T-cell (primary cell): ENCODE measurements at regions of chr1 and their contacts with region 1.

Region 1: GRCh38 chr1:207221934-207222351 is 99.5 kb upstream of the CD55 start:
- DNase-seq: no peak
- ATAC-seq: no peak
- H3K4me3 ChIP-seq: no peak overlapping the region
- H3K4me3 Mint-ChIP-seq: no peak overlapping the region
- H3K27ac ChIP-seq: no peak overlapping the region
- H3K27ac Mint-ChIP-seq: no peak overlapping the region
- H3K4me1 ChIP-seq: no peaks in the 10 kb centered on the region
- H3K4me1 Mint-ChIP-seq: peaks cover 6 to 12% (median 11%) of the 10 kb centered on the region in 3 donors
- H3K27me3 ChIP-seq: peaks cover 0 to 3% of the 10 kb centered on the region in 2 experiments
- H3K27me3 Mint-ChIP-seq: peaks cover 0 to 9% of the 10 kb centered on the region in 2 donors

Region 2: DNA sequence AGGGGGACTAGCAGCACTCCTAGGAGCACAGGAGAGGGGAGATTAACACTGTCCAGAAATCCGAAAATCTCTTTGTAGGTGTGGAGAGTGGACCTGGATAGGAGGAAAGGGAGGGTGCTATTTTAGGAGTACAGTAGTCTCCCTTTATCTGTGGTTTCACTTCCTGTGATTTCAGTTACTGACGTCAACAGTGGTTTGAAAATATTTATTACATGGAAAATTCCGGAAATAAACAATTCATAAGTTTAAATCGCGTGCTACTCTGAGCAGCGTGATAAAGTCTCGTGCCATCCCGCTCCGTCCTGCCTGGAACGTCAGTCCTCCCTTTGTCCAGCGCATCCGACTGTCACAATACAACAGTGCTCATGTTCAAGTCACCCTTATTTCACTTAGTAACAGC is 331.3 kb before region 1 on chr1:
- CTCF ChIA-PET with region 1: no interaction called
- POLR2A ChIA-PET with region 1: no interaction called
- DNase-seq: peak in 1 of 35 experiments; percentile 35
- ATAC-seq: peak in 3 of 4 experiments; percentile 63 to 77 (median 71)
- H3K4me3 ChIP-seq: no peak overlapping the region
- H3K4me3 Mint-ChIP-seq: peak overlapping the region; percentile 29 to 51 (median 31)
- H3K27ac ChIP-seq: no peak overlapping the region
- H3K27ac Mint-ChIP-seq: peak overlapping the region in 1 of 2 donors; percentile 70
- H3K4me1 ChIP-seq: peaks cover 4 to 8% of the 10 kb centered on the region in 2 experiments
- H3K4me1 Mint-ChIP-seq: peaks cover 23 to 38% (median 27%) of the 10 kb centered on the region in 3 donors
- H3K27me3 ChIP-seq: peaks cover 0 to 6% of the 10 kb centered on the region in 2 experiments
- H3K27me3 Mint-ChIP-seq: no peaks in the 10 kb centered on the region

Region 3: DNA sequence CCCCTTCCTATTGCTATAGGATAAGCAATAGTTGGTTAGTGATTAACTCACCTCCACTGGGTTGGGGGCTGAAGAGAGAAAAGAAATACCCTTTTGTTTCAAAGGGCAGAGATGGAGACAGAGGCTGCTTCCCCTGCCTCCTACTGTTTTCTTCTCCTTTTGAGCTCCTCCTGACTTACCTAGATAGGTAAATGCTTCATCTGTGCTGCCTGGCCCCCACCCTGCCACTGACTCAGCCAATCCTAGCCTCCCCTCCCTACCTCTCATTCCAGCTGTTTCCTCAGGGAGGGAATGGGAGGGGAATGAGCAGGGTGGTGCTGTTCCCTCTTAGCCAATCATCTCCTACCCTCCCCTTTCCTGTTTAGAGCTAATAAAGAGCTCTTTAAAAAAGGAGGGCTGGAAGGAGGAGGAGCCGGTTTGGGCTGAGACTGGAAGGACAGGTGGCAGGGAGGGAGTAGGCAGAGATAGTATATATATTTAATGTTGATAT is 189.4 kb before region 1 on chr1 and contains the start of gene C1orf116:
- CTCF ChIA-PET with region 1: no interaction called
- POLR2A ChIA-PET with region 1: no interaction called
- DNase-seq: no peak
- ATAC-seq: no peak
- H3K4me3 ChIP-seq: no peak within 1 kb of the TSS
- H3K4me3 Mint-ChIP-seq: no peak within 1 kb of the TSS
- H3K27ac ChIP-seq: no peak within 1 kb of the TSS
- H3K27ac Mint-ChIP-seq: no peak within 1 kb of the TSS
- H3K4me1 ChIP-seq: no peaks in the 10 kb centered on the region
- H3K4me1 Mint-ChIP-seq: no peaks in the 10 kb centered on the region
- H3K27me3 ChIP-seq: peaks cover 0 to 17% of the 10 kb centered on the region in 2 experiments
- H3K27me3 Mint-ChIP-seq: peaks cover 23 to 38% of the 10 kb centered on the region in 2 donors
- total RNA-seq, gene C1orf116: 0.08 to 0.29 (median 0.14) TPM

Region 4: DNA sequence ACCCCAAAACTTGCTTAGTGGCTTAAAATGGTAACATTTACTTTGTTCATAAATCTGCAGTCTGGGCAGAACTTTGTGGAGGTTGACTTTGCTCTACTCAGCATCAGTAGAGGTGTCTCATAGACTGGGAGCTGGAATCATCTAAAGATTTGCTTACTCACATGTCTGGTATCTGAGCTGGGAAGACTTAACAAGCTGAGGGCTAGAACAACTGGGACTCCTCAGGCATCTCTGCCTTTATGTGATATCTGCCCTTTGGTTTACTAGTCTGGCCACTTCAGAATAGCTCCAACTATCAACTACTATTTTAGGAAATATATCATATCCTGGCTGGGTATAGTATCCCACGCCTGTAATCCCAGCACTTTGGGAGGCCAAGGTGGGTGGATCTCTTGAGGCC is 35.4 kb before region 1 on chr1:
- CTCF ChIA-PET with region 1: no interaction called
- POLR2A ChIA-PET with region 1: no interaction called
- DNase-seq: no peak
- ATAC-seq: no peak
- H3K4me3 ChIP-seq: no peak overlapping the region
- H3K4me3 Mint-ChIP-seq: no peak overlapping the region
- H3K27ac ChIP-seq: no peak overlapping the region
- H3K27ac Mint-ChIP-seq: no peak overlapping the region
- H3K4me1 ChIP-seq: peaks cover 0 to 6% of the 10 kb centered on the region in 2 experiments
- H3K4me1 Mint-ChIP-seq: peaks cover 14 to 25% (median 18%) of the 10 kb centered on the region in 3 donors
- H3K27me3 ChIP-seq: no peaks in the 10 kb centered on the region
- H3K27me3 Mint-ChIP-seq: no peaks in the 10 kb centered on the region

Region 5: GRCh38 chr1:207329469-207329868 is 107.5 kb after region 1 on chr1:
- CTCF ChIA-PET with region 1: no interaction called
- POLR2A ChIA-PET with region 1: interaction called in 1 of 2 experiments, 10 read pairs
- DNase-seq: no peak
- ATAC-seq: peak in 2 of 4 experiments; percentile 12 to 13
- H3K4me3 ChIP-seq: no peak overlapping the region
- H3K4me3 Mint-ChIP-seq: peak overlapping the region in 1 of 3 donors; percentile 32
- H3K27ac ChIP-seq: no peak overlapping the region
- H3K27ac Mint-ChIP-seq: peak overlapping the region; percentile 58 to 62
- H3K4me1 ChIP-seq: peaks cover 3 to 9% of the 10 kb centered on the region in 2 experiments
- H3K4me1 Mint-ChIP-seq: peaks cover 64 to 68% (median 66%) of the 10 kb centered on the region in 3 donors
- H3K27me3 ChIP-seq: no peaks in the 10 kb centered on the region
- H3K27me3 Mint-ChIP-seq: no peaks in the 10 kb centered on the region

Region 6: DNA sequence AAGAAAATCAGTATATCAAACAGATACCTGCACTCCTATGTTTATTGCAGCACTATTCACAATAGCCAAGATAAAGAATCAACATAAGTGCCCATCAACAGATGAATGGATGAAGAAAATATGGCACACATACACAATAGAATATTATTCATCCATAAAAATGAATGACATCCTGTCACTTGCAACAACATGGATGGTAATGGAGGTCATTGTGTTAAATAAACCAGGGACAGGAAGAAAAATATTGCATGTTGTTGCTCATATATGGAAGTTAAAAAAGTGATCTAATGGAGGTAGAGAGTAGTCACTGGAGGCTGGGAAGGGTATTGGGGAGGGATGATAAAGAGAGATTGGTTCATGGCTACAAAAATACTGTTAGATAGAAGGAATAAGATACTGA is 166.8 kb after region 1 on chr1:
- CTCF ChIA-PET with region 1: no interaction called
- POLR2A ChIA-PET with region 1: no interaction called
- DNase-seq: no peak
- ATAC-seq: no peak
- H3K4me3 ChIP-seq: no peak overlapping the region
- H3K4me3 Mint-ChIP-seq: no peak overlapping the region
- H3K27ac ChIP-seq: no peak overlapping the region
- H3K27ac Mint-ChIP-seq: no peak overlapping the region
- H3K4me1 ChIP-seq: no peaks in the 10 kb centered on the region
- H3K4me1 Mint-ChIP-seq: no peaks in the 10 kb centered on the region
- H3K27me3 ChIP-seq: no peaks in the 10 kb centered on the region
- H3K27me3 Mint-ChIP-seq: peaks cover 1 to 4% of the 10 kb centered on the region in 2 donors

Region 7: DNA sequence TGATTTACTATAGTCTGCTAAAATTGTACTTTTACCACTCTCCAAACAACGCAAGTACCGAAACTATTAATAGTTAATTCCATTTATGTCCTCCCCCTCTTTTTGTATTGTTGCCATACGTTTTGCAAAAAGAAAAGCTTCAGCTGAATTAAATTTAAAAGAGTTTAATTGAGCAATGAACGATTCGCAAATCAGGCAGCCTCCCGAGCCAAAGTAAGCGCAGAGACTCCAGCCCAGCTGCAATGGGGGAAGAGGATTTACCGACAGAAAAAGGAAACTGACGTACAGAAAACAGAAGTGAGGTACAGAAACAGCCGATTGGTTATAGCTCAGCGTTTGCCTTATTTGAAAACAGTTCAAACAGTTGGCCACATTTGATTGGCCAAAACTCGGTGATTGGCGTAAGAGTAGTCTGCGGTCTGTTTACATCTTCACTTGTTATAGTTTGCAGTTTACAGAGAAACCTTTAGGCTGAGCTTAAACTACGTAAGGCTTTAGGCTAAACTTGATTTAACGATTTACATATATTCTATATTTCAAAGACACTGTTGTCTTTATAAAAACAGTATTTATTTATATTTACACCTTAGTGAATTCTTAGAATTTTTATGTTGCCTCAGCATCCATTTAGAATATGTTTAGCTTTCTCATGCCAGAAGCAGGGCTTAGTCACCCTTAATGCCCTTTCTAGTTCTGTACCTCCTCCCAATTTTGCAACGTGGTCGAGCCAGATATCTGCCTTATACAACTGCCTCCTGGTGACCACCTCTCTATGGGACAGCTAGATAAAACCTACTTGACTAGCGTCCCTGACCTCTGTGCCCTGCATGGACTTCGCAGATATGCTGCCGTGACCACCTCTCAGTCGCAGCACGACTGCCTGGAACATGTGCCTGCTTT is 297.8 kb after region 1 on chr1:
- CTCF ChIA-PET with region 1: interaction called in 1 of 2 experiments, 11 read pairs
- POLR2A ChIA-PET with region 1: no interaction called
- DNase-seq: no peak
- ATAC-seq: no peak
- H3K4me3 ChIP-seq: no peak overlapping the region
- H3K4me3 Mint-ChIP-seq: no peak overlapping the region
- H3K27ac ChIP-seq: no peak overlapping the region
- H3K27ac Mint-ChIP-seq: no peak overlapping the region
- H3K4me1 ChIP-seq: no peaks in the 10 kb centered on the region
- H3K4me1 Mint-ChIP-seq: no peaks in the 10 kb centered on the region
- H3K27me3 ChIP-seq: peaks cover 0 to 5% of the 10 kb centered on the region in 2 experiments
- H3K27me3 Mint-ChIP-seq: peaks cover 0 to 12% of the 10 kb centered on the region in 2 donors